Caco-2 (cell line): ENCODE measurements at regions of chr1 and their contacts with region 1.

Region 1: DNA sequence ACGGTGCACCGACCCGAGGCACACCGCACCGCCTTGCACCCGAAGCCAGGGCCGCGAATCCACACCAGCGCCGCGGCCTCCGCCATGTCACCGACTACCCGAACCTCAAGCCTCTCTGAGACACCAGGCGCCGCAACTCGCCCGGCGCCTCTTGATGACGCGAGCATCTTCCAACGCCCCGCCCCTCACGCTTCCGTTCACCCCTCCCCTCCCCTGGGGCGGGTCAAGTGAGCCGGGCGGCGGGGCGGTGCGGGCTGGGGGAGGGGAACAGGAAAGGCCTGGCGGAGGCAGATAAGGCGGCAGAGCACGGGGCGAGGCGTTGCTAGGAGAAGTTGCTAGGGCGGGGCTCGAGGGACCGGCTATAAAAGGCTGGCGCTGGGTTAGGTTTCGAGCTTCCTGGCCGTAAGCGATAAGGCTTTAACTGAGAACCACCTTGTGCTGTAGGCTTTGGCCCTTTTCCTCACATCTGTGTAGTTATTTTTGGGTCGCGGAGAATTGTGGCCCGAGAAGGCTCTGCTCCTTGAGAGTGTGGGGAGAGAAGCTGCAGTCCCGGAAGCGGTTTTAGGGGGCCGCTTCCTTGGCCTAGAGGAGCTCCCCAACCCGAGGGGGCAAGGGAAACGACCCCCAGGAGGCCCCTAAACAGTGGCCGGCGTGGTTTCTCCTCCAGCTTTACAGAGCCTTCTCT is at the start of gene SDE2:
- DNase-seq: peak; percentile 99
- H3K4me3 ChIP-seq: peak within 1 kb of the TSS; percentile 58
- H3K4me3 Mint-ChIP-seq: peak within 1 kb of the TSS; percentile 96
- H3K27ac Mint-ChIP-seq: peak within 1 kb of the TSS; percentile 99
- H3K4me1 ChIP-seq: peaks cover 17% of the 10 kb centered on the region
- H3K4me1 Mint-ChIP-seq: peaks cover 13% of the 10 kb centered on the region
- H3K27me3 ChIP-seq: no peaks in the 10 kb centered on the region
- H3K27me3 Mint-ChIP-seq: no peaks in the 10 kb centered on the region
- CTCF ChIP-seq: no peak
- total RNA-seq, gene SDE2: 16.6 and 18.6 TPM in 2 replicates

Region 2: GRCh38 chr1:225881969-225882693 is 117.2 kb before region 1 on chr1 and contains the start of gene TMEM63A:
- CTCF ChIA-PET with region 1: no interaction called
- POLR2A ChIA-PET with region 1: no interaction called
- intact Hi-C with region 1: no loop called
- DNase-seq: peak; percentile 92 to 95
- H3K4me3 ChIP-seq: peak within 1 kb of the TSS; percentile 91
- H3K4me3 Mint-ChIP-seq: peak within 1 kb of the TSS; percentile 95
- H3K27ac Mint-ChIP-seq: peak within 1 kb of the TSS; percentile 91
- H3K4me1 ChIP-seq: peaks cover 29% of the 10 kb centered on the region
- H3K4me1 Mint-ChIP-seq: peaks cover 24% of the 10 kb centered on the region
- H3K27me3 ChIP-seq: no peaks in the 10 kb centered on the region
- H3K27me3 Mint-ChIP-seq: no peaks in the 10 kb centered on the region
- CTCF ChIP-seq: peak in 1 of 2 experiments; percentile 30
- total RNA-seq, gene TMEM63A: 93.9 and 116 TPM in 2 replicates

Region 3: DNA sequence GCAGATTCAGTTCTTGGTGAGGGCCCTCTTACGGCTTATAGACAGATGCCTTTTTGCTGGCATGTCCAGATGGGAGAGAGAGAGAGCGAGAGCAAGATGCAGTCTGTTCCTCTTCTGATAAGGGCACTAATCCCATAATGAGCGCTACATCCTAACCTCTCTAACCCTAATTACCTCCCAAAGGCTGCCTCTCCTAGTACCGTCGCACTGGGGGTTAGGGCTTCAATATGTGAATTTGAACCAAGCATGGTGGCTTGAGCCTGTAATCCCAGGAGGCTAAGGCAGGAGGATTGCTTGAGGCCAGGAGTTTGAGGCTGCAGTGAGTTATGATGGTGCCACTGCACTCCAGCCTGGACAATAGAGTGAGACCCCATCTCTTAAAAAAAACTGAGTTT is 10.3 kb after region 1 on chr1:
- CTCF ChIA-PET with region 1: no interaction called
- POLR2A ChIA-PET with region 1: interaction called, 13 read pairs
- intact Hi-C with region 1: no loop called
- DNase-seq: no peak
- H3K4me3 ChIP-seq: no peak overlapping the region
- H3K4me3 Mint-ChIP-seq: no peak overlapping the region
- H3K27ac Mint-ChIP-seq: no peak overlapping the region
- H3K4me1 ChIP-seq: peaks cover 8% of the 10 kb centered on the region; the same call in 1 of the 2 replicates
- H3K4me1 Mint-ChIP-seq: peaks cover 11% of the 10 kb centered on the region
- H3K27me3 ChIP-seq: no peaks in the 10 kb centered on the region
- H3K27me3 Mint-ChIP-seq: peaks cover 2% of the 10 kb centered on the region
- CTCF ChIP-seq: no peak